T-cell (primary cell): ENCODE measurements at regions of chr9 and their contacts with region 1.

Region 1: DNA sequence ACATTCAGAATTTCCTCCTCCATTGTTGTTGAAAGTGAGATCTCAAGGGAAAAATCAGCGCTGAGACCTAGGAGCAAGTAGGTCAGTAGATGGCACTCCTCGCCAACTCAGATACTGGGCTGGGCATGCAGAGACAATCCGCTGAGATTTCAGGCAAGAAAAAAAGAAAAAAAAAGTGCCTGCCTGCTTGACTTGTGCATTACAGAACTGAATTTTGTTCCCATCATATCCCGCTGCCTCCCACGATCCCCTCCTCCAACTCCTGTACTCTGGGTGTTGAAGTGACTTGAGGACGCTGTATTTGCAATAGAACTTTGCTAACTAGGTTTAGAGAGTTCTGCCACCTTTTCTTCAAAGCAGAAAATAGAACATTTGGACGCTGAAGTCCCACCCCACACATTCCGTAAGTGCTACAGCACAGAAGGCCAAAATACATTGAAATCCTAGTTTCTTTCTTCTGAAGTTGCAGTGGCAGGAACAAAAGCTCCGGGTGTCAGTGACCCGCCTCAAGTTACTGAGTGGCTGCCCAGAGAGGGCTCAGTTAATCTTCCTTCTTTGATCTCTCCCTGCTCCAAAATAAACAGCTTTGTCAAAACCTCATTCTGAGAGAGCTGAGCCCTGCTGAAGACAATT is 265.8 kb downstream of the MLLT3 start:
- DNase-seq: peak in 34 of 35 experiments; percentile 14 to 73 (median 48)
- ATAC-seq: peak; percentile 65 to 80 (median 67)
- H3K4me3 ChIP-seq: no peak overlapping the region
- H3K4me3 Mint-ChIP-seq: peak overlapping the region in 1 of 3 donors; percentile 50
- H3K27ac ChIP-seq: no peak overlapping the region
- H3K27ac Mint-ChIP-seq: peak overlapping the region; percentile 78 to 79
- H3K4me1 ChIP-seq: peaks cover 5 to 14% of the 10 kb centered on the region in 2 experiments
- H3K4me1 Mint-ChIP-seq: peaks cover 47 to 57% (median 51%) of the 10 kb centered on the region in 3 donors
- H3K27me3 ChIP-seq: no peaks in the 10 kb centered on the region
- H3K27me3 Mint-ChIP-seq: no peaks in the 10 kb centered on the region

Region 2: GRCh38 chr9:20426019-20426418 is 69.5 kb after region 1 on chr9:
- CTCF ChIA-PET with region 1: no interaction called
- POLR2A ChIA-PET with region 1: interaction called in 1 of 2 experiments, 12 read pairs
- DNase-seq: no peak
- ATAC-seq: no peak
- H3K4me3 ChIP-seq: no peak overlapping the region
- H3K4me3 Mint-ChIP-seq: no peak overlapping the region
- H3K27ac ChIP-seq: no peak overlapping the region
- H3K27ac Mint-ChIP-seq: no peak overlapping the region
- H3K4me1 ChIP-seq: no peaks in the 10 kb centered on the region
- H3K4me1 Mint-ChIP-seq: peaks cover 39 to 55% (median 47%) of the 10 kb centered on the region in 3 donors
- H3K27me3 ChIP-seq: no peaks in the 10 kb centered on the region
- H3K27me3 Mint-ChIP-seq: no peaks in the 10 kb centered on the region

Region 3: GRCh38 chr9:20441711-20442423 is 85.3 kb after region 1 on chr9:
- CTCF ChIA-PET with region 1: interaction called in 1 of 2 experiments, 10 read pairs
- POLR2A ChIA-PET with region 1: no interaction called
- DNase-seq: no peak
- ATAC-seq: no peak
- H3K4me3 ChIP-seq: no peak overlapping the region
- H3K4me3 Mint-ChIP-seq: peak overlapping the region in 1 of 3 donors; percentile 54
- H3K27ac ChIP-seq: no peak overlapping the region
- H3K27ac Mint-ChIP-seq: no peak overlapping the region
- H3K4me1 ChIP-seq: peaks cover 0 to 14% of the 10 kb centered on the region in 2 experiments
- H3K4me1 Mint-ChIP-seq: peaks cover 61 to 72% (median 66%) of the 10 kb centered on the region in 3 donors
- H3K27me3 ChIP-seq: no peaks in the 10 kb centered on the region
- H3K27me3 Mint-ChIP-seq: no peaks in the 10 kb centered on the region

Region 4: DNA sequence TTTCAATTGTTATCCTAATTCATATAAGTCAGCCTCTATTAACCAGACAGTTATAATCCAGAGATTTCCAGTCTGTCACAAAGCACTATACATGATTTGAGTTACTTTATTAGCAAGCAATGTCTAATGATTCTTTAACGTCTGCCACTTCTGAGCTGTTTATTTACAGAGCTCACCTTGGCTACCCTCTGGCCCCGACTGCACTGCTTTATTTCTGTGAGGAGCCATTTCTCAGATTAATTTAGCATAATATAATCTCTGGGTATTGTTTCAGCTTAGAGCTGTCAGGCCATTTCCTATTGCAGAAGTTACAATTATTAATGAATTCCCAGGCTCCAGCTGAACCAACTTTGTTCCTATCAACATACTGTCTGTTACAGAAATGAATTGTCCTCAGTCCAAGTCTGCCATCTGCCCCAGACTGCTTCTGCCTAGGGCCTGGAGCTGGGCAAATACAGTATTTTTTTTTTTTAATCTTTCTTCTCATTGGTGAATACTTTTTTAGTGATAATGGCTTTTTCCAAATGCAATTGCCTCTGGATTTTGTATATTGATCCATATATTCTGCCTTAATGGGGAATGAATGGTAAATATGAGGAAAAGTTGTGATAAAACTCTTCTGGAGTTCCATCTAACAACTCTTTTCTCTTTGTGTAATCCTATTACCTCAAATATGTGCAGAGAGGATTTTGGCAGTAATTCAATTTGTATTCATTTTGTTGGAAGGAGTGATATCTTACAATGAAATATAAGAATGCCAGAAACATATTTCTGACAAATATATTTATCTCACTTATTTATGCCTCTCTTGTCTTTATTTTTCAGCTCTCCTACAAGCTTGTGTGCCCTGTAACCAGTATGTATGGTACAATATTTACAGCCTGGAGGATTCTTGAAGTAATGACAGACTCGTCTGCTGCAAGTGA is 432.3 kb after region 1 on chr9:
- CTCF ChIA-PET with region 1: no interaction called
- POLR2A ChIA-PET with region 1: interaction called in 1 of 2 experiments, 10 read pairs
- DNase-seq: no peak
- ATAC-seq: no peak
- H3K4me3 ChIP-seq: no peak overlapping the region
- H3K4me3 Mint-ChIP-seq: no peak overlapping the region
- H3K27ac ChIP-seq: no peak overlapping the region
- H3K27ac Mint-ChIP-seq: no peak overlapping the region
- H3K4me1 ChIP-seq: no peaks in the 10 kb centered on the region
- H3K4me1 Mint-ChIP-seq: no peaks in the 10 kb centered on the region
- H3K27me3 ChIP-seq: no peaks in the 10 kb centered on the region
- H3K27me3 Mint-ChIP-seq: no peaks in the 10 kb centered on the region